Activated CD4-positive, alpha-beta T cell treated with anti-CD3 and anti-CD28 coated beads, Interleukin-2, amount 10 ng/mL, durations not matched to agents 24 days and 14 days (primary cell): ENCODE measurements at regions of chr5 and their contacts with region 1.

Region 1: DNA sequence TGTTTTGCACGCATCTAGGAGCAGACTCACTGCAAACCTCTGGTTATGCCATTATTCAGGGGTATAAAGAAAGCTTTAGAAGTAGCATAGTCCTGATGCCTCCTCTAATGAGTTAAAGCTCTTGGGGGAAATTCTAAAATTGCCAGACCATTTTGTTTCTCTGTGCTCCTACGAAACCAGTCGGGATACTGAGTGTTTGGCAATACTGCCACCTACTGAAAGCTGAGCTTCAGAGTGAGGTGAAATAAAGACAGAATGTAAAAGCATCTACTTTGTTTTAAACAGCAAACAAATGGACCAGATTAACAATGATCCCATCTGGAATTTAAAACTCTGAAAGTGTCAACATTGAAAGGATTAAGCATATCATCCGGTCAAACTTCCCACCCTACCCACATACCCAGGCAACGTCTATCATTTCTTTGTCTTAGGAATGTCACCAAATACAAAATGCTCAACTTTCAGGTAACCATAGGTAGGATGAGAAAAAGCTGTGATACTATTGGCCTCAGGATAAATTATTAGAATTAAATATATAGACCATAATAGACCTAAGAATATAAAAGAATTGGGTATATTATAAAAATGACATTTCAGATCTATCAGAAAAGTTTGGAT is 77.8 kb upstream of the SHISAL2B start:
- DNase-seq: peak; percentile 63
- H3K4me3 Mint-ChIP-seq: no peak overlapping the region
- H3K27ac Mint-ChIP-seq: no peak overlapping the region
- H3K4me1 Mint-ChIP-seq: no peaks in the 10 kb centered on the region
- H3K27me3 Mint-ChIP-seq: peaks cover 22% of the 10 kb centered on the region

Region 2: GRCh38 chr5:64229163-64229774 is 383.2 kb before region 1 on chr5:
- intact Hi-C with region 1: loop called (anchors 2 kb)
- DNase-seq: no peak
- H3K4me3 Mint-ChIP-seq: no peak overlapping the region
- H3K27ac Mint-ChIP-seq: no peak overlapping the region
- H3K4me1 Mint-ChIP-seq: no peaks in the 10 kb centered on the region
- H3K27me3 Mint-ChIP-seq: no peaks in the 10 kb centered on the region

Region 3: DNA sequence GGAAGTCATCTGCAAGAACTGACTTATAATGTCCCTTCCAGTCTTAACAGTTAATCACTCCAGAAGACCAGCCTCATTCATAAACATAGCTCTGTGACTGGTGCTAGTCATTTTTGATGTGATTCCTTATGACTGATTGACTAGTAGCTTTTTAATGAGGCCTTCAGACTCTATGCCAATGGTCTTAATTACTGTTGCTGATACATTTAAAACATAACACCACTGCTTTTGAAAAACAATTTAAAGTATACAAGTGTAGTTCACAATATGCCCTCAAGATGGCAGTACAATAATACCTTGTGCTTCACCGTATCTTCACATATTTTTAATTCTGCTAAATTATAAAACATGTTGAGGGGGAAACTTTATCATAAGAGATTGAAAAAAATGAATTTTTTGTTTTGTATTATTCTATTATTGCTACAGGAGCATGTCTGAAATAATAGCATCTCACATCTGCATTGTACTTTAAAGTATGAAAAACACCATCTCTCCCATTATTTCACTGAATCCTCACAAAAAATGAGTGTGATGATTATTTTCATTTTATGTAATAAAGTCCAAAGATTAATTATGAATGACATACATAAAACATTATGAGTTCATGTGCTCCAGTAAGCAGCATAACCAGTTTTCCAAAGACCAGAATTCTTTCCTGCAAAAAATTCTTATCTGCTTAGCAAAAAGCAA is 22.7 kb after region 1 on chr5:
- intact Hi-C with region 1: no loop called
- DNase-seq: no peak
- H3K4me3 Mint-ChIP-seq: no peak overlapping the region
- H3K27ac Mint-ChIP-seq: no peak overlapping the region
- H3K4me1 Mint-ChIP-seq: peaks cover 5% of the 10 kb centered on the region
- H3K27me3 Mint-ChIP-seq: peaks cover 30% of the 10 kb centered on the region

Region 4: DNA sequence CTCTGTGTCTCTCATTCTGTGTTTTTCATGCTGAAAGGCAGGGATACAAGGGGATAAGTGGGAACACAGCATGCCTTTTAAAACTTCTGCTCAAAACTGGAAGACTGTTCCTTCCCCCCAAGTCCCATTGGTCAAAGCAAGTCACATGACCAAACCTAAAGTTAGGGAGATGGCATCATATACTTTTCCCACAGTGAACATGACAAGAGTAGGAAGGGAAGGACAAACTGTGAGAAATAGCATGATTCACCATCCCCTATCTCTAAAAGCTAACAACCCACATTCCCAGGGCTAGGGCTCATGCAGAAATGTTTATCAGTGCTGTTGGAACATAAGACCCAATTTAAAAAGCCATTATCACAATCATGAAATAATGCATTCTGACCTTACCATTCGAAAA is 53.6 kb after region 1 on chr5:
- intact Hi-C with region 1: no loop called
- DNase-seq: no peak
- H3K4me3 Mint-ChIP-seq: no peak overlapping the region
- H3K27ac Mint-ChIP-seq: no peak overlapping the region
- H3K4me1 Mint-ChIP-seq: no peaks in the 10 kb centered on the region
- H3K27me3 Mint-ChIP-seq: peaks cover 6% of the 10 kb centered on the region

Region 5: DNA sequence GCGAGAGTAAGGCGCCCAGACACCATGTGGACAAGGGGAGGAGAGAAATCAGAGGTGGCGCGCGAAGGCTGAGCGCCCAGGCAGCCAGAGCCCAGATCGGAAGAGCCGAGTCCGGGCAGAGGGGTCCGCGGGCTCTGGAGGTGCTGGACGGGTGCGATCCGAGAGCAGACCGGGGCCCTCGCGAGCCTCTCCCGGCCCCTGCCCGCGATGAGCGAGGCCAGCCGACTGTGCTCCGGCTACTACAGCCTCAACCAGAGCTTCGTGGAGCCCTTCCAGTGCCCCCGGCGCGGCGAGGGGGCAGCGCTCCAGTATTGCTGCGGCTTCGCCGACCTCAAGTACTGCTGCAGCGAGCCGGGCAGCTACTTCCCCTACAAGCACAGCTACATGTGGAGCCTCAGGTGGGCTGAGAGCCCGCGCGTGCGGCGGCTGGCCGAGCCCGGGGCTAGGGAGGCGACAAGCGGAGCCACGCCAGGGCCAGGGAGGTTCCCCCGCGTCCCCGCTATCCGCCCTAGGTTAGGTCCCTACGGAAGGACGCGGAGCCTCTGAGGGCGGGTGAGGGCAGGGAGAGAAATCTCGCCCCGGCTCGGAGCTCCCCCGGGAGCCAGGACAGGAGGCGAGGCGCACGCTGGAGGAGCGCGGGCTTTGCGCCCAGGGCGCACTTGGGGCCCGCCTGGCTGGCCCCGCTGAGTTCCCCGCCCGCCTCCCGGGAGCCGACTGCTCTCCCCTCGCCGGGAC is 78.1 kb after region 1 on chr5 and contains the start of gene SHISAL2B:
- intact Hi-C with region 1: no loop called
- DNase-seq: no peak
- H3K4me3 Mint-ChIP-seq: peak within 1 kb of the TSS; percentile 60
- H3K27ac Mint-ChIP-seq: no peak within 1 kb of the TSS
- H3K4me1 Mint-ChIP-seq: peaks cover 3% of the 10 kb centered on the region
- H3K27me3 Mint-ChIP-seq: peaks cover 54% of the 10 kb centered on the region
- total RNA-seq, gene SHISAL2B: not detected in 2 replicates